Naive thymus-derived CD4-positive, alpha-beta T cell (primary cell): ENCODE measurements at regions of chr9 and their contacts with region 1.

Region 1: DNA sequence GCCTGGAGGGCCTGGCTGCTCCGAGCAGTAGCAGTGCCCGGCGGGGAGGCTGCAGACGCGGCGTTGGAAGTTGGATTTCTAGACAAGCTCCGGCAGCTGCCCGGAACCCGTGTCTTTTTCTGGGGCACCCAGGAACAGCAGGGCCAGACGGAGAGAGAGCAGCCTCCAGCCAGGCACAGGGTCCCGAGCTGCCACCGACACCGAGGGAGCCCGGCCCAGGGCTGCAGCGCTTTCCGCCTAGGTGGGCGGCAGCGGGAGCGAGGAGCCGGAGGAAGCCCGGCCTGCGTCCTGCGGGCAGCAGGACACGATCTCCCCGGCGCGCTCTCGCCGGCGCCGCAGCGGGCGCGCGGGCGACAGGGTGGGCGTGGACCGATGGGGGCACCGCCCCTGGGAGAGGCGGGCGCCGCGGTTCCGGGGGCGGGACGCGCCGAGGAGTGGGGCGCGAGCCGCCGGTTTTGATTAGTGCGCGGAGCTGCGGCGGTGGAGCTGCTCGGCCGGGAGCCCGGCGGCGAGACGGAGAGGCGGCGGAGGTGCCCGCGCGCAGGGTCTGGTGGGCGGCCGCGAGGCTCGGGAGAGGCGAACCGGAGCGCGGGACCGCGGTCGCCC is at the start of gene UGCG:
- DNase-seq: peak; percentile 80 to 95 (median 92)
- ATAC-seq: peak; percentile 97
- H3K4me3 ChIP-seq: peak within 1 kb of the TSS; percentile 87
- H3K4me3 Mint-ChIP-seq: peak within 1 kb of the TSS in 7 of 10 donors; percentile 91 to 96 (median 95)
- H3K27ac ChIP-seq: peak within 1 kb of the TSS; percentile 80
- H3K27ac Mint-ChIP-seq: peak within 1 kb of the TSS; percentile 88 to 95 (median 94)
- H3K4me1 ChIP-seq: peaks cover 17 to 40% of the 10 kb centered on the region in 2 donors
- H3K4me1 Mint-ChIP-seq: peaks cover 7 to 32% (median 29%) of the 10 kb centered on the region in 7 donors
- H3K27me3 ChIP-seq: no peaks in the 10 kb centered on the region
- H3K27me3 Mint-ChIP-seq: no peaks in the 10 kb centered on the region
- total RNA-seq, gene UGCG: 21.1 to 40.9 (median 24.5) TPM

Region 2: DNA sequence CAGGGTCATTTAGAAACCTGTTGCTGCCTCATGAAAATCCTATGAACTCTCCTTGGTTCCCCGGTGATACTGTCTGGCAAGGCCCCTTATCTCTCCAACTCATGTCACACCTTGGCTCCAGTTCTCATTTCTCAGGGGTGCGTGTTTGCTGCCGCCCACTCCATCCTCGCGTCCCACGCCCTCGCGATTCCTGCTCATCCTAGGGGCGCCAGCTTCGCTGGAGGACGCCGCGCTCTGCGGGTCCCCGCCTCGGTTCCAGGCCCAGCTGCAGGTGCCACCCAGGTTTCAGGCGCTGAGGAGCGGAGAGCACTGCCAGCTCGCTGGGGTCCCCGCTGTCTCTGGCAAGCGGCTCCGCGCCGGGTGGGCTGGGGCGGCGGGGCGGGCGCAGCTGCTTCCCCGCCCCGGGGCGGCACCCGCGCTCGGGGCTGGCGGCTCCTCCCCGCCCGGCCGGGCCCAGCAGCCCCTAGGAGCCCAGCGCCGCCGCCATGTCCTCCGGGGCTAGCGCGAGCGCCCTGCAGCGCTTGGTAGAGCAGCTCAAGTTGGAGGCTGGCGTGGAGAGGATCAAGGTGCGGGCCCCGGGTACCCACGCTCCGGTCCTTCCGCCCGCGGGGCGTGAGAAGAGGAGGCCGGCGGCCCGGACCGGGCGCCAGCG is 235.2 kb before region 1 on chr9 and contains the start of gene GNG10:
- CTCF ChIA-PET with region 1: no interaction called
- POLR2A ChIA-PET with region 1: no interaction called
- intact Hi-C with region 1: loop called (anchors 2 to 5 kb)
- DNase-seq: peak; percentile 57 to 79 (median 68)
- ATAC-seq: peak; percentile 95
- H3K4me3 ChIP-seq: peak within 1 kb of the TSS; percentile 70
- H3K4me3 Mint-ChIP-seq: peak within 1 kb of the TSS; percentile 87 to 97 (median 93)
- H3K27ac ChIP-seq: peak within 1 kb of the TSS; percentile 71
- H3K27ac Mint-ChIP-seq: peak within 1 kb of the TSS; percentile 82 to 97 (median 92)
- H3K4me1 ChIP-seq: peaks cover 18 to 31% of the 10 kb centered on the region in 2 donors
- H3K4me1 Mint-ChIP-seq: peaks cover 16 to 44% (median 32%) of the 10 kb centered on the region in 7 donors
- H3K27me3 ChIP-seq: no peaks in the 10 kb centered on the region
- H3K27me3 Mint-ChIP-seq: no peaks in the 10 kb centered on the region
- total RNA-seq, gene GNG10: 5.3 to 26.1 (median 12.2) TPM

Region 3: DNA sequence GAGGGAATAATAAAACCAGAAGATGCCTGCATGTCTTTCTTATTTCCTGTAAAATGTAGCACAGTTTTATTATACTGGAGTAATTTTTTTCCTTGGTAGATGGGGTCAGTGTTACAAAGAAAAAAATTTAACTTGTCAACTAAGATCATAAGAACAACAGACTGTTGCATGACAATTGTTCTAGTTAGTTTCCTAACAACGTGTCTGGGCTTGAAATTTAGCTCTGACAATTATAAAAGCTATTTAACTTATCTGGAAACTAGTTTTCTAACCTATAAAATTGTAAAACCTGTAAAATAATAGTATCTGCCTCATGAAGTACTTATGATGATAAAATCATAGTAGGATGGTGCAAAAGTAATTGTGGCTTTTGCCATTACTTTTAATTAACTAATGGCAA is 106.6 kb before region 1 on chr9:
- CTCF ChIA-PET with region 1: no interaction called
- POLR2A ChIA-PET with region 1: no interaction called
- intact Hi-C with region 1: no loop called
- DNase-seq: no peak
- ATAC-seq: no peak
- H3K4me3 ChIP-seq: no peak overlapping the region
- H3K4me3 Mint-ChIP-seq: no peak overlapping the region
- H3K27ac ChIP-seq: no peak overlapping the region
- H3K27ac Mint-ChIP-seq: no peak overlapping the region
- H3K4me1 ChIP-seq: no peaks in the 10 kb centered on the region
- H3K4me1 Mint-ChIP-seq: no peaks in the 10 kb centered on the region
- H3K27me3 ChIP-seq: no peaks in the 10 kb centered on the region
- H3K27me3 Mint-ChIP-seq: no peaks in the 10 kb centered on the region

Region 4: GRCh38 chr9:111839388-111839787 is 57.1 kb before region 1 on chr9:
- CTCF ChIA-PET with region 1: no interaction called
- POLR2A ChIA-PET with region 1: no interaction called
- intact Hi-C with region 1: no loop called
- DNase-seq: no peak
- ATAC-seq: no peak
- H3K4me3 ChIP-seq: no peak overlapping the region
- H3K4me3 Mint-ChIP-seq: no peak overlapping the region
- H3K27ac ChIP-seq: no peak overlapping the region
- H3K27ac Mint-ChIP-seq: no peak overlapping the region
- H3K4me1 ChIP-seq: no peaks in the 10 kb centered on the region
- H3K4me1 Mint-ChIP-seq: peaks cover 0 to 8% (median 0%) of the 10 kb centered on the region in 7 donors
- H3K27me3 ChIP-seq: no peaks in the 10 kb centered on the region
- H3K27me3 Mint-ChIP-seq: peaks cover 0 to 14% (median 7%) of the 10 kb centered on the region in 5 donors

Region 5: GRCh38 chr9:111916234-111916645 is 19.8 kb after region 1 on chr9:
- CTCF ChIA-PET with region 1: interaction called, 3 read pairs
- POLR2A ChIA-PET with region 1: interaction called, 49 read pairs
- intact Hi-C with region 1: loop called (anchors 1 kb)
- DNase-seq: peak in 1 of 9 donors; percentile 46
- ATAC-seq: no peak
- H3K4me3 ChIP-seq: no peak overlapping the region
- H3K4me3 Mint-ChIP-seq: peak overlapping the region in 8 of 10 donors; percentile 15 to 67 (median 56)
- H3K27ac ChIP-seq: no peak overlapping the region
- H3K27ac Mint-ChIP-seq: peak overlapping the region in 6 of 9 donors; percentile 4 to 70 (median 43)
- H3K4me1 ChIP-seq: peaks cover 25 to 36% of the 10 kb centered on the region in 2 donors
- H3K4me1 Mint-ChIP-seq: peaks cover 33 to 67% (median 63%) of the 10 kb centered on the region in 7 donors
- H3K27me3 ChIP-seq: no peaks in the 10 kb centered on the region
- H3K27me3 Mint-ChIP-seq: no peaks in the 10 kb centered on the region

Region 6: DNA sequence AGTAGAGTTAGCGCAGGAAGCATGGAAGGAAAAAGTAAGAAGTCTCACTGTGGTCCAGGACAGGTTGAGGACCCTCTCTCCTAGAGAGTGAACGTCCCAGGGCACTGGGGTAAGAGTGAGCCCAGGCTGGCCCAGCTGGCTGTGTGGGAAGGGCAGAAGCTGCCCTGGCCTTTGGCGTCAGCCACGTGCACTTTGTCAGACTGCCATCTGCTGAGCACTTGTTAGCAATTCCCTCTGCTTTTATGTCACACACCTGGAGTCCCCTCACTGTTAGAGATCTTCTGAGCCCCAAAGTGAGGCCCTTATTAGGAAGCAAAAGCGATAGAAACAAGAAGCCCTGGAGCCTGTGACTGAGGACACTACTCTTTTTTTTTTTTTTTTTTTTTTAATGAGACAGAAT is 79.3 kb after region 1 on chr9:
- CTCF ChIA-PET with region 1: no interaction called
- POLR2A ChIA-PET with region 1: no interaction called
- intact Hi-C with region 1: loop called in 1 of 2 experiments (anchors 1 kb)
- DNase-seq: peak in 2 of 9 donors; percentile 9 to 14
- ATAC-seq: peak; percentile 47
- H3K4me3 ChIP-seq: no peak overlapping the region
- H3K4me3 Mint-ChIP-seq: no peak overlapping the region
- H3K27ac ChIP-seq: no peak overlapping the region
- H3K27ac Mint-ChIP-seq: no peak overlapping the region
- H3K4me1 ChIP-seq: no peaks in the 10 kb centered on the region
- H3K4me1 Mint-ChIP-seq: peaks cover 2 to 20% (median 10%) of the 10 kb centered on the region in 7 donors
- H3K27me3 ChIP-seq: no peaks in the 10 kb centered on the region
- H3K27me3 Mint-ChIP-seq: peaks cover 0 to 13% (median 0%) of the 10 kb centered on the region in 5 donors

Region 7: GRCh38 chr9:112074250-112075008 is 178.0 kb after region 1 on chr9:
- CTCF ChIA-PET with region 1: interaction called, 3 read pairs
- POLR2A ChIA-PET with region 1: interaction called, 9 read pairs
- intact Hi-C with region 1: loop called (anchors 2 kb)
- DNase-seq: peak in 8 of 9 donors; percentile 53 to 81 (median 74)
- ATAC-seq: peak; percentile 90
- H3K4me3 ChIP-seq: no peak overlapping the region
- H3K4me3 Mint-ChIP-seq: peak overlapping the region in 9 of 10 donors; percentile 64 to 79 (median 72)
- H3K27ac ChIP-seq: no peak overlapping the region
- H3K27ac Mint-ChIP-seq: peak overlapping the region in 8 of 9 donors; percentile 6 to 85 (median 47)
- H3K4me1 ChIP-seq: peaks cover 3 to 16% of the 10 kb centered on the region in 2 donors
- H3K4me1 Mint-ChIP-seq: peaks cover 14 to 38% (median 28%) of the 10 kb centered on the region in 7 donors
- H3K27me3 ChIP-seq: no peaks in the 10 kb centered on the region
- H3K27me3 Mint-ChIP-seq: no peaks in the 10 kb centered on the region

Region 8: DNA sequence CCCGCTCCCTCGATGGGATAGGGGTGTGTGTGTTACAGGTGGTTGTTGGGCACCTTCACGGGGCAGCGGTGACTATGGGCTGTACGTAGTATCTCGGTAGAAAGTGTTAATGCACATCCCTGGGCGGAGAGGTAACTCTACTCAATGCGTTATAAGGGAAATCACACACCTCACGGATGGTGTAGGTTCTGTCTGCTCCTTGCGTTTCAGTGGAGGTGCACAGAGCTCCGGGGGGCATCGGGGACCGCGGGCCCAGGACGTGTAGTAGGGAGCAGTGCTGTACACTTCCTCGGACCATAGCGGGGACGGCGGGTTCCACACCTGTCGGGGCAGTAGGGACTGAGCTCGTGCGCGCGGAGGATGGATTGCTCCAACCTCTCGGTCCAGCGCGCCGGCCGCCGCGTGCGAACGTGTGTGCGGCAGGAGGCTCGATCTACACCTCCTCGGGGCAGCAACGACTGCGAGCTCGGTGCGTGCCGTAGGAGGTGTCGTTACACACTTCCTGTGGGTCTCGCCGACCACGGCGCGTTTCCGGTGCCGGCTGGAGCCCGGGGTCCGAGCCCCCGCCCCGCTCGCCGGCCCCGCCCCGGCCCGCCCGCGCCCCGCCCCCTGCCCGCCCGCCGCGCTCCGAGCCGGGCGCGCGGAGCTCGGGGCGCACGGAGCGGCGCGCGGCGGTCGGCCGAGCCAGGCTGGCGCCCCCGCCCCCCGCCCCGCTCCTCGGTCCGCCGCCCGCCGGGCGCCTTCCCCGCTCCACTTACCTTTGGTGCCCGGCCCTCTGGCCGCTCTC is 590.0 kb after region 1 on chr9 and contains the start of gene KIAA1958:
- CTCF ChIA-PET with region 1: no interaction called
- POLR2A ChIA-PET with region 1: interaction called, 3 read pairs
- intact Hi-C with region 1: loop called (anchors 2 to 10 kb)
- DNase-seq: peak; percentile 51 to 88 (median 73)
- ATAC-seq: peak; percentile 88
- H3K4me3 ChIP-seq: peak within 1 kb of the TSS; percentile 69
- H3K4me3 Mint-ChIP-seq: peak within 1 kb of the TSS; percentile 95 to 100 (median 98)
- H3K27ac ChIP-seq: peak within 1 kb of the TSS; percentile 72
- H3K27ac Mint-ChIP-seq: peak within 1 kb of the TSS; percentile 93 to 98 (median 97)
- H3K4me1 ChIP-seq: peaks cover 4 to 6% of the 10 kb centered on the region in 2 donors
- H3K4me1 Mint-ChIP-seq: peaks cover 19 to 64% (median 49%) of the 10 kb centered on the region in 7 donors
- H3K27me3 ChIP-seq: no peaks in the 10 kb centered on the region
- H3K27me3 Mint-ChIP-seq: peaks cover 0 to 6% (median 0%) of the 10 kb centered on the region in 5 donors
- total RNA-seq, gene KIAA1958: 6.2 to 8.3 (median 7.0) TPM